ENCODE measurements at regions of chr9 and their contacts with region 1.

Region 1: DNA sequence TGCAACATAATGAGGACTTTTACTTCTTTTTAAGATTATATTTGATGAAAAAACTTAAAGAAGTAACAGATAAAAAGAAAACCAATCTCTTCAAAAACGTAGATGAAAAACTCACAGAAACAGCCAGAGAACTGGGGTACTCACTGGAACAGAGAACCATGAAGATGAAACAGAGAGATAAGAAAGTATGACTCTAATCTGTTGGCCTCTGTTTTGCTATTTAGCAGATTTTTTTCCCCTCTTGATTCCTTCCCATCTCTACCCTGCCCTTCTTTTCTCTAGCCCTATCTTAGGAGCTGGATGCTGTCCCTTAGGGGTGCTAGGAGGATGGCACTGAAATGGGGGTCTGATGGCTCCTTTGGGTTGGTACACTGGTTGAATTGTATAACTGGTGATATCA is 97.5 kb upstream of the FREM1 start:
- DNase-seq: no peak
- ATAC-seq: no peak

Region 2: DNA sequence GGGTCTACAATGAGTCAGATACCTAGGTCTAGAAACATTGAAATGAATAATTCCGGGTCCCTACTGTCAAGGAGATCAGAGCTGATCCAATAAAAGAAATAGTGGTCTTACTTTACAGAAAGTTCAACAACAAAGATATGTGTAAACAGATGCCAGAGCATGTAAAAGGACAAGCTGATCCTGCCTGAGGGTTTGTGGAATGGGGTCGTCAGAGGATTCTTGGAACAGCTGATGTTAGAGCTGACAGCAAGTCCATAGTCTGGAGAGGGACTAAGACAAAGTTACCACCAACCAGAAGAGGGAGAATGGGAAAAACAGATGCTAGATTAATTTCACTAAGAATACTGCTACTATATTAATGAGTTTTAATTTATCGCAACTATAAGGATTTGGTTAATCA is 169.0 kb before region 1 on chr9:
- intact Hi-C with region 1: no loop called
- DNase-seq: no peak
- ATAC-seq: no peak

Region 3: GRCh38 chr9:14941501-14942405 is 65.9 kb before region 1 on chr9:
- intact Hi-C with region 1: loop called in 1 of 2 experiments (anchors 10 kb)
- DNase-seq: no peak
- ATAC-seq: no peak

Region 4: DNA sequence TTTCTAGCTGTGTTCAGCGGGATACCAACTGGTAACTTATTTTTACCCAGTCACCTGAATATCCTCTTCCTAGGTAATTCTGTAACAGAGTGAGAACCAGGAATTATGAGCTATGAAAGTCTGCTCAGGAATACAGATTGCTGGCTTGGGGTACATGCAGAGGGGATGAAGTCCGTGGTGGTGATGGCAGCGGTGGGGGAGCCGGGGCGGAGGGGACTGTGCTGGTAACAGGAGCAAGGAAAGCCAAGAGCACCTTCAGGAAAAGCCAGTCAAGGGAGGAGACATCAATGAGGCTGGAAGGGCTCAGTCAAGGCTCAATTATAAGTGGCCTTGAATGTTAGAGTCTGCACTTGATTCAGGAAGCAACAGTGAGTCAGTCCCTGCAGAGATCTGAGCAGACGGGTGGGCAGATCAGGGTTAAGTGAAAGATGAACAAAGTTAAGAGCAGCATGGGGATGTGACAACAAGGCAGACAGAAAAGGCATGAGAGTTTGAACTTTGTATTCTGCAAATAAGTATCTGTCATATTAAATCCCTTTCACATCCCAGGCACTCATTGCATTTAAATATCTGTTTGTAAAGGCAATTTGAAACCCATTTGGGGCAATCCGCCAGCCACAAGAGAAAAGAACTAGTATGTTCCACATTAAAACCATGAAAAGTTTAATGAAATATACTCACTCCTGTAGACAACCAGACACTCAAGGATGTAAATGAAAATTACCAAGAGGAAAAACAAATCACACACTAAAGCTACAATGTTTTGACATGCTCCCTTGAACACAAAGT is 198.1 kb after region 1 on chr9:
- intact Hi-C with region 1: no loop called
- DNase-seq: no peak
- ATAC-seq: no peak

Measured in left colon (tissue), 2 donors.